BJ (cell line): ENCODE measurements at regions of chr2 and their contacts with region 1.

Region 1: DNA sequence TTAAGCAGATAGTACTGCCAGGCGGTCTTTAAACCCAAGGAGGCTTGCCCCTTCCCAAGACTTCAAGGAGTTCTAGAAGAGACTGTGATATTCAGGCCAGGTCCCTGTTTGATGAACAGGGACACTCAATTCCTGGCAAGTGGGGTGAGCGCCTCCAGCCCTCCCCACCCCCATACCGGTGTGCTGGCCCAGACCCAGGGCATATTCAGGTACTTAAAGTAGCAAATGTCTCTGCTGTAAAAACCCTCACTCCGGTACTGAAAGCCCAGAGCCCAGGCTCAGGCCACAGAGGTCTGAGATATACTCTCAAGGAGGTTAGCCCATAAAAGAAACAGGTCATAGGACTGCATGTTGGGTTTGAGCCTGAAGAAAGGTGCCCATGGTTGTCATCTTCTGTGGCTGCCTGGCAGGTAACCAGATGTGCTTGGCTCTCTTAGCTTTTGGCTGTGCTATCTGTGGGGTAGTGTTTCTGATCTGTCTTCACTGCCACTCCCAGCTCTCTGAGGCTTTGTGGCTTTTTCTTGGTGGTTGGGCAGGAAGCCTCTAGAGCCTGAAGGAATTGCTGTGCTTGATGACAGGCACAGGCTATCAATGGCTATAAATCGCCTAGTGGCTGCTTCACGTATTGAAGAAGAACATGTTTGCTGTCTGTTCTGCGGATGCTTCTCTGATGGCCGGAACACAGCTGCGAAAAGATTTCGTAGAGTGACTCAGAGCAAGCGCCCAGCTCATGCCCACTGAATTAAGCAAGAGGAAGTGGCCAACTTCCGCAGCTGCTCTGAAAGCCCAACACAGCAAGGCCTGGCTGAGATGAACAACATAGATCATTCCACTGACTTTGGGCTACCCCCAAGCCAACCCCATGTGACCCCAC is 63.3 kb upstream of the ALPP start:
- DNase-seq: peak; percentile 52
- H3K4me3 ChIP-seq: no peak overlapping the region
- H3K27me3 ChIP-seq: no peaks in the 10 kb centered on the region
- CTCF ChIP-seq: 0 out of 2 replicates have a peak, but pooled peaks have one; percentile 11

Region 2: DNA sequence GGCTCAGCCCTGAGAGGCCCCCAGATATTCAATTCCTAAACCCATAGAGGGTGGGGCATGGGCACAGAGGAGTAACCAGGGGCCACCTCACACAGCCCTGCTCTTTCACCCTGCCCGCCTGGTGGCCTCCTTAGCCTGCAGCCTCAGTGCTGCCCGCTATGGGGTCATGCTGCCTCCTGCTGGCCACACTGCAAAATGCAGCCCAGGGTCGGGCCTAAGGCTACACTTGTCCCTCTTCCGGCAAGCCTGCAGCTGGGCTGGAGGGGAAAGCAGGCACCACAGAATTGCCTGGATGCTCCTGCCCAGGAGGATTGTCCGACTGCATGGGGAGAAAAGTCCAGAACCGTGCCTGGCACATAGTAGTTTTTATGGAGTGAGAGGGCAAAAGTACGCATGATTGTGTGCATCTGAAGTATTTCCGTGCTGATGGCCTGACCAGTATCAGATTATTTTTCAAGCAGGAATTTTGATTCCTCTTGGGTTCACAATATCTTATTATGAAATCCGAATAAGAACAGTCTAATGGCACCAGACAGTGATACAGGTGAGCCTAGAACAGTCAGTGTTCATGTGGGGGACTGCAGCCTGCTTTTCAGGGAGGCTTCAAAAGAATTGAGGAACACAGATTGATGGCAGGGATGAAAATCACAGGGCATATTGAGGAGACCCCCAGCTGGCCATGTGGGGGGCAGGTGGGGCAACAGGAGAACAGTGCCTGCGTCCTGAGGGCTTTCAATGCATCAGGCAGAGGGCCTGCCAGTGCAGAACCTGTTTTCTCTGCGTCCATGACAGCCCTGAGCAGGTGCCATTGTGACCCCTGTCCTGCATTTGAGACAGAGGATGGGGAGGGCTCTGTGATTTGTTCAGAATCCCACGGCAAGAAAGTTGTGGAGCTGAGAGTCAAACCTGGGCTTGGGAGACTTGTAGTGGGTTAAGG is 12.1 kb after region 1 on chr2:
- CTCF ChIA-PET with region 1: interaction called, 10 read pairs
- POLR2A ChIA-PET with region 1: no interaction called
- DNase-seq: peak; percentile 0
- H3K4me3 ChIP-seq: no peak overlapping the region
- H3K27me3 ChIP-seq: no peaks in the 10 kb centered on the region
- CTCF ChIP-seq: peak; percentile 78

Region 3: DNA sequence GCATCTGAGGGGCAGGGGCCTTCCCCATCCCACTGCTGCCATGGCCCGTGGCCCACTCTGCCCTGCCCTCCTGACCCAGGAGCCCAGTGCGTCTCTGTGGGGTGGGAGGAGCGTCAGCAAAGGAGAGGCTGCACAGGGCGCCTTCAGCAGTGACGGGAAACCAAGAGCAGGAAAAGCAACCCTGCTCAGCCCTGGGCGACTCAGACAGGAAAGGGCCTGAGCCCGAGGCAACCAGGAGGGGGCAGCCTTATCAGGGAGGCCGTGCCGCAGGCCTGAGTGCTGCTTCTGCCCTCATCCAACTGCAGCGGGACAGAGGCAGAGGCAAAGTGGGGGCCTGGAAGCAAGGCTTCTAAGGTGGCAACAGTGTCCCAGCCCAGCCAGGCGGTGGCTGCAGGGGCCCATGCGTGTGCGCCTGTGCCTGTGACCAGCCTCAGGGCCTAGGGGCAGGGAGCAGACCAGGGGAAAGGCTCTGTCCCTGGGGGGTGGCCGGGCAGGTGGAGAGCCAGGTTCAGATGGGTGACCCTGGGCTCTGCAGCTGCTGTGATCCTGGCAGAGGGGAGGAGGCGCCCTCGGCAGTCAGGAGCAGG is 117.4 kb after region 1 on chr2:
- CTCF ChIA-PET with region 1: no interaction called
- POLR2A ChIA-PET with region 1: no interaction called
- DNase-seq: no peak
- H3K4me3 ChIP-seq: no peak overlapping the region
- H3K27me3 ChIP-seq: no peaks in the 10 kb centered on the region; the same call in 1 of the 2 replicates
- CTCF ChIP-seq: peak; percentile 16; the same call in 1 of the 2 replicates